Naive thymus-derived CD4-positive, alpha-beta T cell (primary cell): ENCODE measurements at regions of chr11 and their contacts with region 1.

Region 1: DNA sequence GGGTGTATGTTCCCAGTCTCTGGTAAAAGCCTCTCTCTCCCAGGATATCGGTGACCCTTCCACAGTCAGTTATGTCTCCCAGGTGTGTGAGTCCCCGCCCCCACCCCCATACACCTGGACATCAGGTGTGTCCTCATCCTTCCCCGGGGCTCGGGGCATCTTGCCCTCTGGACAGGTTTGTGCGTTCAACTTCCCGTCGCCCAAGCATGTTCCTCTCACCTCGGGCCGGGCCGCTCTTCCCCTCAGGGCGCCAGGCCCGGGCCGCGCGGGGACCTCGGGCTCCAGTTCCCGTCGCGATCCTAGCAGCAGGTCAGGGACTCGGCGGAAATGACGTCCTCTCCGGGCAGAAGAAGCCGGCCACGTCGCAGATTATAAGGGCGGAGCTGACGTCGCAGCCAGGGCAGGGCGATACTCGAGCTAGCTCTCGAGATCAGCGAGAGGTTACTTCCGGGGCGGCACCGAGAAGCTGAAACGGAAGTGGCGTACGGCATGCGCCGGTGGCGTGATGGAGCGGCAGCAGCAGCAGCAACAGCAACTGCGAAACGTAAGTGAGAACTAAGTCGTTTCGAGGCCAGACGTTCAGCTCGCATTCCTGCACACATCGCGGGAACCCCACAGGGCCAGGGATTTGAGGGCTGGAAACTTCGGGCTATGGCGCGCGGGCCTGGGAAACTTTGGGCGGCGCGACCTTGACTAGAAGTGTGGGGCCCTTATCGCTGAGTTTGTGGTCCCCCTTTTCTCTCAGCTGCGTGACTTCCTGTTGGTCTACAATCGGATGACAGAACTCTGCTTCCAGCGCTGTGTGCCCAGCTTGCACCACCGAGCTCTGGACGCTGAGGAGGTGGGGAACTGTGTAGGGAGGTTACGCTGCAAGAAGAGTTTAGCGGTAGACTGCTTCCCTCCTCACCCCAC is at the starts of genes ARFIP2 and TIMM10B:
- DNase-seq: peak; percentile 83 to 98 (median 94)
- ATAC-seq: peak; percentile 98
- H3K4me3 ChIP-seq: peak within 1 kb of the TSS; percentile 74
- H3K4me3 Mint-ChIP-seq: peak within 1 kb of the TSS; percentile 87 to 99 (median 97)
- H3K27ac ChIP-seq: peak within 1 kb of the TSS; percentile 86
- H3K27ac Mint-ChIP-seq: peak within 1 kb of the TSS; percentile 93 to 99 (median 98)
- H3K4me1 ChIP-seq: peaks cover 22 to 24% of the 10 kb centered on the region in 2 donors
- H3K4me1 Mint-ChIP-seq: peaks cover 29 to 48% (median 43%) of the 10 kb centered on the region in 7 donors
- H3K27me3 ChIP-seq: no peaks in the 10 kb centered on the region
- H3K27me3 Mint-ChIP-seq: no peaks in the 10 kb centered on the region
- total RNA-seq, gene ARFIP2: 48.6 to 63.4 (median 53.8) TPM
- total RNA-seq, gene TIMM10B: 39.3 to 68.4 (median 59.2) TPM

Region 2: DNA sequence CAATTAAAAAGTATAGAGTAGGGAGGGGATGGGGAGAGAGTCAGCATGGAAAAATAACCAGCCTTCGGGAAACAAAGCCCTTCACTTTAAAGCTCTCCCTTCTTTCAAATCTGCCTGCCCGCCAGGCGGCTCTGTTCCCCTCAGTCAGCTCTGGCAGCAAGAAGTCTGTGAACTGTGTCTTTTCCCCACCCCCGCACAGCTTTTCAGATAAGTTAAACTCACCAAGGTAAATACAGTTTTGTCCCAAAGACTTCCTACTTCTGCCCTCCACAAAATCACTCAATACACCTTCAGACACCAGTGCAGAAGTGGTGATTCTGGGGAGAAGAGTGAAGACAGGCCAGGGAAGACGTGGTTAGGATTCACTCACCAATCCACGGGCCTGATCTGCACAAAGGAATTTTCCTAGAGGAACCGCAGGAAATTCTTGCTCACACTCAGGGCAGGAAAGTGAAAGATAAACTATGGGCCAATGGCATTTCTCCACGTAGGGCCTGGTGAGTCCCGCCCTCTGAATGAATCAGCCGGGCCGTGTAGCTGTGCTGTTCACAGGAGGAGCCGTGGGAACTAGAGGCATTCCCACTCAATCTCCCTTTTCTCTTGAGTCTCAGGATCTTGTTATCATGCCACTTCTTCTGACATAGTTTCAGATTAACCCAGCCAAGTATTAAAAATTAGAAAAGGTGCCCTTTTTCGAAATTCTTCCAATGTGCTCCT is 796.5 kb before region 1 on chr11 and contains the start of gene TRIM5:
- CTCF ChIA-PET with region 1: no interaction called
- POLR2A ChIA-PET with region 1: interaction called, 3 read pairs
- intact Hi-C with region 1: loop called (anchors 5 to 10 kb)
- DNase-seq: peak; percentile 37 to 86 (median 83)
- ATAC-seq: peak; percentile 90
- H3K4me3 ChIP-seq: peak within 1 kb of the TSS; percentile 90
- H3K4me3 Mint-ChIP-seq: peak within 1 kb of the TSS; percentile 81 to 99 (median 94)
- H3K27ac ChIP-seq: peak within 1 kb of the TSS; percentile 76
- H3K27ac Mint-ChIP-seq: peak within 1 kb of the TSS; percentile 90 to 98 (median 95)
- H3K4me1 ChIP-seq: peaks cover 9 to 23% of the 10 kb centered on the region in 2 donors
- H3K4me1 Mint-ChIP-seq: peaks cover 28 to 83% (median 66%) of the 10 kb centered on the region in 7 donors
- H3K27me3 ChIP-seq: no peaks in the 10 kb centered on the region
- H3K27me3 Mint-ChIP-seq: no peaks in the 10 kb centered on the region
- total RNA-seq, gene TRIM5: 16.9 to 36.8 (median 26.2) TPM

Region 3: DNA sequence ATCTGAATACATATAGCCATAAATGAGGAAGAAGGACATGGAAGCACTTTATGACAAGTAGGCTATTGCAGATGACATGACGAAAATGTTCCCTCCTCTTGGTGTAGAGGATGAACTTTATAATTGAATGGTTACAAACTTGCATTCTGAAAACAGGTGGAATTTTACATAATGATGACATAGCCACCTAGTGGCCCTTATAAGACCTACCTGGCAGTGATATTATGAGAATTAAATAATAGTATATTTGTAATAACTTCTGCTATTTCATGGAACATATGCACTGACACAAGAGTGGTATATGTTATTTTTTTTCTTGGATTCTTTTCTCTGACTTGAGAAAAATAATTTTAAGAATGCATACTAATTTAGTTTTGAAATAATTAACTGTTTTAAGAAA is 768.8 kb before region 1 on chr11:
- CTCF ChIA-PET with region 1: no interaction called
- POLR2A ChIA-PET with region 1: no interaction called
- intact Hi-C with region 1: no loop called
- DNase-seq: peak in 3 of 9 donors; percentile 8 to 33 (median 22)
- ATAC-seq: peak; percentile 42
- H3K4me3 ChIP-seq: no peak overlapping the region
- H3K4me3 Mint-ChIP-seq: no peak overlapping the region
- H3K27ac ChIP-seq: no peak overlapping the region
- H3K27ac Mint-ChIP-seq: peak overlapping the region in 7 of 9 donors; percentile 6 to 83 (median 19)
- H3K4me1 ChIP-seq: no peaks in the 10 kb centered on the region
- H3K4me1 Mint-ChIP-seq: peaks cover 0 to 13% (median 4%) of the 10 kb centered on the region in 7 donors
- H3K27me3 ChIP-seq: no peaks in the 10 kb centered on the region
- H3K27me3 Mint-ChIP-seq: no peaks in the 10 kb centered on the region

Region 4: GRCh38 chr11:6419009-6419631 is 62.1 kb before region 1 on chr11 and contains the start of gene APBB1:
- CTCF ChIA-PET with region 1: interaction called, 3 read pairs
- POLR2A ChIA-PET with region 1: interaction called, 16 read pairs
- intact Hi-C with region 1: loop called (anchors 1 kb)
- DNase-seq: peak; percentile 71 to 87 (median 81)
- ATAC-seq: peak; percentile 89
- H3K4me3 ChIP-seq: peak within 1 kb of the TSS; percentile 79
- H3K4me3 Mint-ChIP-seq: peak within 1 kb of the TSS in 7 of 10 donors; percentile 78 to 92 (median 85)
- H3K27ac ChIP-seq: peak within 1 kb of the TSS; percentile 92
- H3K27ac Mint-ChIP-seq: peak within 1 kb of the TSS; percentile 47 to 92 (median 89)
- H3K4me1 ChIP-seq: peaks cover 27 to 46% of the 10 kb centered on the region in 2 donors
- H3K4me1 Mint-ChIP-seq: peaks cover 2 to 18% (median 14%) of the 10 kb centered on the region in 7 donors
- H3K27me3 ChIP-seq: no peaks in the 10 kb centered on the region
- H3K27me3 Mint-ChIP-seq: peaks cover 0 to 36% (median 11%) of the 10 kb centered on the region in 5 donors
- total RNA-seq, gene APBB1: 46.9 to 188 (median 154) TPM

Region 5: DNA sequence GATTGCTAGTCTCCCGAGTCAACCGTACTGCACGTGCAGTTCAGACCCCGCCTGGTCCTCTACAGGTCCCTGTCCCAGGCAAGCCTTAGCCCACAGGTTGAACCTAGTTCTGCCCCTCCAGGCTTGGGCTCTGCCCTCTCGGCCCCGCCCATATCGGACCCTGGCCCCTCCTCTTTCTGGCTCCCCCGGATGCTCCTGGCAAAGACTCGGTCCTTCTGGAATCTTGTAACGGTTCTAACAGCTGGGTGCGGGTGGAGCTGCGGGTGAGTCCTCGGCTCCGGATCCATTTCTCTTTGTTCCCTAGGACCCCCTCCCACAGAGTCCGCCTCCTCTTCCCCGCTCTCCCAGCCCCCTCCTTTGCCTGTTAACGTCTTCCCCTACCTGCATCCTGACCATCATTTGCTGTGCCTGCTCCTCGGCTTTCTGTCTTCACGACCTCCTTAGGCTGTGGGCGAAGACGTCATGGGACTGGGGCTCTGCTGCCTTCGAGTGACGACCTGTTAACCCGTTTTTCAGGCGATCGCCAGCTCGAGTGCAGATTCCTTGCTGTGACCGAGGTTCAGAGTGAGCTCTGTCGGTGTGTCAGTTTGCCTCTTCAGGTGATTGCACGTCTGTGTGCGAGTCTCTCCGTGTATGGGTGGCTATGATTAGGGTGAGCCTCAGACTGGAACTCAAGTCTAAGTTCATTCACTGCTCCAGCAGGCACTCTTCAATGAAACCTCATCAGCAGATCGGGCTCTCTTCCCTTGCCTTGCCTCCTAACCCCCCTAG is 16.0 kb after region 1 on chr11 and contains the start of gene DNHD1:
- CTCF ChIA-PET with region 1: interaction called, 5 read pairs
- POLR2A ChIA-PET with region 1: interaction called, 12 read pairs
- intact Hi-C with region 1: no loop called
- DNase-seq: no peak
- ATAC-seq: no peak
- H3K4me3 ChIP-seq: no peak within 1 kb of the TSS
- H3K4me3 Mint-ChIP-seq: no peak within 1 kb of the TSS
- H3K27ac ChIP-seq: no peak within 1 kb of the TSS
- H3K27ac Mint-ChIP-seq: peak within 1 kb of the TSS in 3 of 9 donors; percentile 7 to 57 (median 26)
- H3K4me1 ChIP-seq: no peaks in the 10 kb centered on the region
- H3K4me1 Mint-ChIP-seq: peaks cover 4 to 39% (median 27%) of the 10 kb centered on the region in 7 donors
- H3K27me3 ChIP-seq: no peaks in the 10 kb centered on the region
- H3K27me3 Mint-ChIP-seq: no peaks in the 10 kb centered on the region
- total RNA-seq, gene DNHD1: 24.0 to 65.8 (median 62.2) TPM

Region 6: GRCh38 chr11:6603287-6604080 is 122.2 kb after region 1 on chr11 and contains the starts of genes ILK and RRP8:
- CTCF ChIA-PET with region 1: no interaction called
- POLR2A ChIA-PET with region 1: interaction called, 4 read pairs
- intact Hi-C with region 1: loop called (anchors 1 kb)
- DNase-seq: peak; percentile 69 to 86 (median 78)
- ATAC-seq: peak; percentile 92
- H3K4me3 ChIP-seq: peak within 1 kb of the TSS; percentile 85
- H3K4me3 Mint-ChIP-seq: no peak within 1 kb of the TSS
- H3K27ac ChIP-seq: peak within 1 kb of the TSS; percentile 86
- H3K27ac Mint-ChIP-seq: no peak within 1 kb of the TSS
- H3K4me1 ChIP-seq: peaks cover 51% of the 10 kb centered on the region in 2 donors
- H3K4me1 Mint-ChIP-seq: peaks cover 9 to 33% (median 21%) of the 10 kb centered on the region in 7 donors
- H3K27me3 ChIP-seq: no peaks in the 10 kb centered on the region
- H3K27me3 Mint-ChIP-seq: no peaks in the 10 kb centered on the region
- total RNA-seq, gene ILK: 34.4 to 165 (median 89.6) TPM
- total RNA-seq, gene RRP8: 21.4 to 37.9 (median 27.9) TPM

Region 7: DNA sequence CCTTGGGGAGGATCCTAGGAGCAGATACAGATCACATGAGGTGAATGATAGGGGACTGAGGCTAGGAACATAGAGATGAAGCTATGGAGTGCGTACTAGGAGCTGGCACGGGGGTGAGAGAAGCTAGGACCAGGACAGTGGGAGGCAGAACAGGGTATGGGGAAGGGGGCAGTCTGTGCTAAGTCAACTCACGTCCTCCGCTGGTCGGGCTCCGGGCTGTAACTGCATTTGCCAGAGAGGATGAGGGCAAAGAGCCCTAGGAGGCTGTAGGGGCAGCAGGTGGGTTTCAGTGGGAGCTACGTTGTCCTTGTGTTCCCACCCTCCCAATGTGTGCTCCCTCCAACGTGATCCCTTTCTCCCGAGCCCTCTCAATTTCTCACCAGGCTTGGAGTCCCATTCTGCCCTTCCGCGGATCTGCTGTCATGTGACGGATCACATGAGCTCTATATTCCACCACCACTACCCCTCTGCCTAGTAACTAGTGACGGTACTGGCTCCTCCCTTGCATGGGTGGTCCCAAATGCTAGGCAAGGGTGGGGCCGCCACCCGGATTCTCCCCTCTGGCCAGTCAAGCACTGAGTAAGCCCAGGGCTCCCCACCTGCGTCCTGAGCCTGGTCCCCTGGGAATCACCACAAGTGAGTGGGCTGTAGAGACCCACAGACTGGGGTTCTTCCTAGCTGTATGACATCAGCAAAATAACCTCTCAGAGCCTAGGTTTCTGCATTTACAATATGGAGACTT is 137.9 kb after region 1 on chr11 and contains the start of gene TPP1:
- CTCF ChIA-PET with region 1: no interaction called
- POLR2A ChIA-PET with region 1: interaction called, 14 read pairs
- intact Hi-C with region 1: no loop called
- DNase-seq: peak; percentile 76 to 94 (median 90)
- ATAC-seq: peak; percentile 96
- H3K4me3 ChIP-seq: peak within 1 kb of the TSS; percentile 91
- H3K4me3 Mint-ChIP-seq: no peak within 1 kb of the TSS
- H3K27ac ChIP-seq: peak within 1 kb of the TSS; percentile 87
- H3K27ac Mint-ChIP-seq: no peak within 1 kb of the TSS
- H3K4me1 ChIP-seq: peaks cover 6 to 22% of the 10 kb centered on the region in 2 donors
- H3K4me1 Mint-ChIP-seq: peaks cover 7 to 17% (median 9%) of the 10 kb centered on the region in 7 donors
- H3K27me3 ChIP-seq: no peaks in the 10 kb centered on the region
- H3K27me3 Mint-ChIP-seq: no peaks in the 10 kb centered on the region
- total RNA-seq, gene TPP1: 49.9 to 160 (median 134) TPM

Region 8: DNA sequence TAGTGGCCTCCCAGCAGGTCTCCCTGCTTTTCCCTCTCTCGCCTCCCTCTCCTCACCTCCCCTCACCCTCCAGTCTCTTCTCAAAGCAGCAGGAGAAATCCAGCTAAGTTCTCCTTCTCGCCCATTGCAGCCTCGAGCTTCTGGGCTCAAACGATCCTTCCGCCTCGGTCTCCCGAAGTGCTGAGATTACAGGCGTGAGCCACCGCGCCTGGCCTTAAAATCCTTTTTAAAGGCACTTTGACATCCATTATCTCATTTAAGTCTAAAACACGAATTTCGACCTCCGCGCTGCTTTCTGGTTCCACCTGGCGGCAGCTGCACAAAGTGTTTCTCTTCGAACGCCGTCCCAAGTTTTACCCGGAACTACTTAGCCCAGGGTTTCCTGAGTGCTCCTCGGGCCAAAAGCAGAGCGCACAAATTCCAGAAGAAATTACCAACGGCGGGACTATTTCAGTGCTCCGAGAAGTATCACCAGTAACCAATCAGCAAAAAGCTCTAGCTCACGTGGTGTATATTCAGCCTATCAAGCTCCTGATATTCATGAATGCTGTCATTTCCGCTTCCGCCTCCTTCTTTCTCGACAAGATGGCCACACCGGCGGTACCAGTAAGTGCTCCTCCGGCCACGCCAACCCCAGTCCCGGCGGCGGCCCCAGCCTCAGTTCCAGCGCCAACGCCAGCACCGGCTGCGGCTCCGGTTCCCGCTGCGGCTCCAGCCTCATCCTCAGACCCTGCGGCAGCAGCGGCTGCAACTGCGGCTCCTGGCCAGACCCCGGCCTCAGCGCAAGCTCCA is 1505.7 kb after region 1 on chr11 and contains the start of gene EIF3F:
- CTCF ChIA-PET with region 1: no interaction called
- POLR2A ChIA-PET with region 1: no interaction called
- intact Hi-C with region 1: loop called in 1 of 2 experiments (anchors 5 kb)
- DNase-seq: peak; percentile 64 to 98 (median 95)
- ATAC-seq: peak; percentile 98
- H3K4me3 ChIP-seq: peak within 1 kb of the TSS; percentile 70
- H3K4me3 Mint-ChIP-seq: peak within 1 kb of the TSS; percentile 85 to 99 (median 92)
- H3K27ac ChIP-seq: peak within 1 kb of the TSS; percentile 78
- H3K27ac Mint-ChIP-seq: peak within 1 kb of the TSS; percentile 88 to 100 (median 97)
- H3K4me1 ChIP-seq: peaks cover 20 to 31% of the 10 kb centered on the region in 2 donors
- H3K4me1 Mint-ChIP-seq: peaks cover 29 to 64% (median 49%) of the 10 kb centered on the region in 7 donors
- H3K27me3 ChIP-seq: no peaks in the 10 kb centered on the region
- H3K27me3 Mint-ChIP-seq: no peaks in the 10 kb centered on the region
- total RNA-seq, gene EIF3F: 222 to 405 (median 353) TPM